Natural killer cell (primary cell): ENCODE measurements at regions of chr19 and their contacts with region 1.

Region 1: GRCh38 chr19:35468637-35469036 is 20.6 kb downstream of the FFAR2 start:
- DNase-seq: peak; percentile 58 to 84
- ATAC-seq: peak; percentile 96 to 100 (median 100)
- H3K4me3 ChIP-seq: no peak overlapping the region
- H3K4me3 Mint-ChIP-seq: no peak overlapping the region
- H3K27ac ChIP-seq: no peak overlapping the region
- H3K27ac Mint-ChIP-seq: no peak overlapping the region
- H3K4me1 ChIP-seq: peaks cover 10% of the 10 kb centered on the region
- H3K4me1 Mint-ChIP-seq: peaks cover under 1 to 13% of the 10 kb centered on the region in 2 donors
- H3K27me3 ChIP-seq: no peaks in the 10 kb centered on the region
- H3K27me3 Mint-ChIP-seq: no peaks in the 10 kb centered on the region
- CTCF ChIP-seq: peak; percentile 72

Region 2: GRCh38 chr19:35419805-35420204 is 48.8 kb before region 1 on chr19:
- intact Hi-C with region 1: loop called (anchors 1 kb)
- DNase-seq: no peak
- ATAC-seq: no peak
- H3K4me3 ChIP-seq: no peak overlapping the region
- H3K4me3 Mint-ChIP-seq: no peak overlapping the region
- H3K27ac ChIP-seq: no peak overlapping the region
- H3K27ac Mint-ChIP-seq: peak overlapping the region; percentile 47
- H3K4me1 ChIP-seq: peaks cover 11% of the 10 kb centered on the region
- H3K4me1 Mint-ChIP-seq: peaks cover 6 to 12% of the 10 kb centered on the region in 2 donors
- H3K27me3 ChIP-seq: no peaks in the 10 kb centered on the region
- H3K27me3 Mint-ChIP-seq: peaks cover 18 to 21% of the 10 kb centered on the region in 2 donors
- CTCF ChIP-seq: no peak

Region 3: DNA sequence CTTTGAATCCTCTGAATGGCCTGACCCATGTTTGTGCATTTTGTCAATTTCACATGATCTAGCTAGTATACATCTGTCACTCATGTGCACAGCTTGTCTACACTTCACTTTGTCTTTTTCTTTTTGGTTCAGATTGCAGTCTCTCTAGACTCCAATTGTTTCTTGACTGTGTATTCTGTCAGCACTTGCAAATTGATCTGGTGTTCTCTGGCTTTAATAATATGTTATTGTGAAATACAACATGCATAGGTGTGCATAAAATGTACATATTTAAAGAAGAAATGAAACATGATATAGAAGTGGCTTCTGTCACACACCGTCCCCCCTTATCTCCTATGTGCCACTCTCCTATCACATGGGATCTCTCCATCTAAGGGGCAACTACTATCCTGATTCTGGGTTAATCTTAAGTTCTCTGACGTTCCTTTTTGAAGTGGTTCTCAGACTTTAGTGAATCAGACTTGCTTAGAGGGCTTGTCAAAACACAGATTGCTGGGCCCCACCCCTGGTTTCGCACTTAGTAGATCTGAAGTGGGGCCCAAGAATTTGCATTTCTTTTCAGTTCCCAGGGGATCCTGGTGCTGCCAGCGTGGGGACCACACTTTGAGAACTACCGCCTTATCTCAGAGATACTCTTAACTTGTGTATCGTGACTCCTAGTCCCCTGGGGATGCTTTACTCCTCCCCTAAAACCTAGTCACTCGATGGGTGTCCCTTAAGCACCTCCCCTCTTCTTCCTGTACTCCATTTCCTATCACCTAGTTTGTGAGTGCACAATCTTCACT is 15.8 kb after region 1 on chr19:
- intact Hi-C with region 1: no loop called
- DNase-seq: no peak
- ATAC-seq: no peak
- H3K4me3 ChIP-seq: no peak overlapping the region
- H3K4me3 Mint-ChIP-seq: no peak overlapping the region
- H3K27ac ChIP-seq: no peak overlapping the region
- H3K27ac Mint-ChIP-seq: no peak overlapping the region
- H3K4me1 ChIP-seq: no peaks in the 10 kb centered on the region
- H3K4me1 Mint-ChIP-seq: no peaks in the 10 kb centered on the region
- H3K27me3 ChIP-seq: no peaks in the 10 kb centered on the region
- H3K27me3 Mint-ChIP-seq: peaks cover 6 to 15% of the 10 kb centered on the region in 2 donors
- CTCF ChIP-seq: no peak